Naive thymus-derived CD4-positive, alpha-beta T cell (primary cell): ENCODE measurements at regions of chr7 and their contacts with region 1.

Region 1: DNA sequence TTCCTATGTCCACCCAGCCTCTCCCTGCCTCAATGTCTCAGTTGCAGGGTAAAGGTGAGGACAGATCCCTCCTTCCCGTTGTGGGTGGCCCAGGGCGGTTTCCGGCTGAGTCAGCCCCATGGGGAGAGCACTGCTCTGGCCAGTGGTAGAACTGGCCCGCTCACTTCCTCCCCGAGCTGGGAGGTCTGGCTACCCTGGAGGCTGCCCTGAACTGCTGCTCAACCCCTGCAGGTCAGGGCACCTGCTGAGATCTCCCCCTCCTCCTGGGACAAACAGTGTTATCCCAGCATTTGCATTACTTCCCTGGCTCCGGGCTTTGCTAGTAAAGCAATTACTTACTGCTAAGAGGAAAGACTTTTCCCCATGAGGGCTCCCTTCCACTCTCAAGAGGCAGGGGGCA is 21.4 kb upstream of the IMPDH1 start:
- DNase-seq: no peak
- ATAC-seq: no peak
- H3K4me3 ChIP-seq: no peak overlapping the region
- H3K4me3 Mint-ChIP-seq: no peak overlapping the region
- H3K27ac ChIP-seq: no peak overlapping the region
- H3K27ac Mint-ChIP-seq: no peak overlapping the region
- H3K4me1 ChIP-seq: no peaks in the 10 kb centered on the region
- H3K4me1 Mint-ChIP-seq: peaks cover 0 to 16% (median 0%) of the 10 kb centered on the region in 7 donors
- H3K27me3 ChIP-seq: no peaks in the 10 kb centered on the region
- H3K27me3 Mint-ChIP-seq: peaks cover 0 to 15% (median 5%) of the 10 kb centered on the region in 5 donors

Region 2: DNA sequence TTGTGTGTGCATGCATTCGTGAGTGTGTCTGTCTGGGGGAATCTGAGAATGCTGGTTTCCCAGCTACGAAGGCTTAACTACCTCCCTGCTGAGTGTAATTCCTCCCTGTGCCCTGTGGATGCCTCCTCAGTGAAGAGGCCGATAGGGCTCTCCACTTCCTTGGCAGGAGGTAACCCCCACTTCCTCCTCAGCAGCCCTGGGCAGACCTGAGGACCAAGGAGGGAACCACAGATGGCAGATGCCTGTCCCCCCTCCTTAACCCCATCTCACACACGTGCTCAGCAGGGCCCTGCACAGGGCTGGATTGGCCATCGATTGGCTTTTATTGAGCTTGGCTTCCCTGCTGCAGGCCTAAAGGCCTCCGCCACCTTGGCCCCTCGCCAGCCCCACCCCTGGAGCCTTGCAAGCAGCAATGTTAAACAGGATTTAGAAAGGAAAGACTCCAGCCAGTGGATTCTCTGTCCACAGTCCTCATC is 354.4 kb before region 1 on chr7:
- CTCF ChIA-PET with region 1: no interaction called
- POLR2A ChIA-PET with region 1: no interaction called
- intact Hi-C with region 1: no loop called
- DNase-seq: no peak
- ATAC-seq: no peak
- H3K4me3 ChIP-seq: no peak overlapping the region
- H3K4me3 Mint-ChIP-seq: no peak overlapping the region
- H3K27ac ChIP-seq: no peak overlapping the region
- H3K27ac Mint-ChIP-seq: no peak overlapping the region
- H3K4me1 ChIP-seq: no peaks in the 10 kb centered on the region
- H3K4me1 Mint-ChIP-seq: peaks cover 0 to 14% (median 6%) of the 10 kb centered on the region in 7 donors
- H3K27me3 ChIP-seq: no peaks in the 10 kb centered on the region
- H3K27me3 Mint-ChIP-seq: no peaks in the 10 kb centered on the region

Region 3: DNA sequence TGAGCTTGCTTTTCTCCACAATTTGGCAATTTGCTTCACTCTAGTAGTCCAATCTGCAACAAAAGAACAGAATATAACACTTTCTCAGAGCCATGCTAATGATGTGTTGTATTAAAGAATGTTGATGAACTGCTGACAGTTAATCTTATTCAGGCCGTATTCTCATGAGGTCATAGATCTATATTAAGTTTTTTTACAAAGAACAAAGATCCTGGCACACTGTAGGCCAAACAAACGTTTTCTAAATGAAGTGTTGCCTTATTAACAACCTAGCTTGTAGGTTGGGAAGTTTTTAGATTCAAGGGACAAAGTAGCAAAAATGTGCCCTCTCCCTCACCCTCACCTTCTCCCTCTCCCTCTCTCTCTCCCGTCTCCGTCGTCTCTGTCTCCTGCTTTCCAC is 31.2 kb after region 1 on chr7:
- CTCF ChIA-PET with region 1: interaction called, 204 read pairs
- POLR2A ChIA-PET with region 1: interaction called, 16 read pairs
- intact Hi-C with region 1: loop called (anchors 1 kb)
- DNase-seq: no peak
- ATAC-seq: no peak
- H3K4me3 ChIP-seq: no peak overlapping the region
- H3K4me3 Mint-ChIP-seq: no peak overlapping the region
- H3K27ac ChIP-seq: no peak overlapping the region
- H3K27ac Mint-ChIP-seq: peak overlapping the region in 2 of 9 donors; percentile 31 to 67
- H3K4me1 ChIP-seq: peaks cover 3 to 11% of the 10 kb centered on the region in 2 donors
- H3K4me1 Mint-ChIP-seq: peaks cover 7 to 28% (median 14%) of the 10 kb centered on the region in 7 donors
- H3K27me3 ChIP-seq: no peaks in the 10 kb centered on the region
- H3K27me3 Mint-ChIP-seq: no peaks in the 10 kb centered on the region